Activated T-helper 1 cell treated with anti-CD3 and anti-CD28 coated beads, Interleukin-12 subunit alpha, Interleukin-12 subunit beta, Interleukin-2, Interleukin-4 antibody, amounts not matched to agents 30 ng/mL and 10 ng/mL and 1 ng/mL, durations not matched to agents 14 hours and 24 hours and 36 hours (primary cell): ENCODE measurements at regions of chr12 and their contacts with region 1.

Region 1: GRCh38 chr12:57782608-57783465 is at the start of gene TSFM:
- DNase-seq: peak; percentile 93
- H3K4me3 Mint-ChIP-seq: peak within 1 kb of the TSS; percentile 98
- H3K27ac Mint-ChIP-seq: peak within 1 kb of the TSS; percentile 98
- H3K4me1 Mint-ChIP-seq: peaks cover 44% of the 10 kb centered on the region
- H3K27me3 Mint-ChIP-seq: no peaks in the 10 kb centered on the region
- total RNA-seq, gene TSFM: 63.5 and 68.6 TPM in 2 replicates

Region 2: GRCh38 chr12:57771708-57772428 is 11.0 kb before region 1 on chr12 and contains the start of gene METTL1:
- intact Hi-C with region 1: loop called (anchors 1 kb)
- DNase-seq: peak; percentile 90
- H3K4me3 Mint-ChIP-seq: peak within 1 kb of the TSS; percentile 93
- H3K27ac Mint-ChIP-seq: peak within 1 kb of the TSS; percentile 99
- H3K4me1 Mint-ChIP-seq: peaks cover 40% of the 10 kb centered on the region
- H3K27me3 Mint-ChIP-seq: no peaks in the 10 kb centered on the region
- total RNA-seq, gene METTL1: 89.7 and 90.0 TPM in 2 replicates

Region 3: DNA sequence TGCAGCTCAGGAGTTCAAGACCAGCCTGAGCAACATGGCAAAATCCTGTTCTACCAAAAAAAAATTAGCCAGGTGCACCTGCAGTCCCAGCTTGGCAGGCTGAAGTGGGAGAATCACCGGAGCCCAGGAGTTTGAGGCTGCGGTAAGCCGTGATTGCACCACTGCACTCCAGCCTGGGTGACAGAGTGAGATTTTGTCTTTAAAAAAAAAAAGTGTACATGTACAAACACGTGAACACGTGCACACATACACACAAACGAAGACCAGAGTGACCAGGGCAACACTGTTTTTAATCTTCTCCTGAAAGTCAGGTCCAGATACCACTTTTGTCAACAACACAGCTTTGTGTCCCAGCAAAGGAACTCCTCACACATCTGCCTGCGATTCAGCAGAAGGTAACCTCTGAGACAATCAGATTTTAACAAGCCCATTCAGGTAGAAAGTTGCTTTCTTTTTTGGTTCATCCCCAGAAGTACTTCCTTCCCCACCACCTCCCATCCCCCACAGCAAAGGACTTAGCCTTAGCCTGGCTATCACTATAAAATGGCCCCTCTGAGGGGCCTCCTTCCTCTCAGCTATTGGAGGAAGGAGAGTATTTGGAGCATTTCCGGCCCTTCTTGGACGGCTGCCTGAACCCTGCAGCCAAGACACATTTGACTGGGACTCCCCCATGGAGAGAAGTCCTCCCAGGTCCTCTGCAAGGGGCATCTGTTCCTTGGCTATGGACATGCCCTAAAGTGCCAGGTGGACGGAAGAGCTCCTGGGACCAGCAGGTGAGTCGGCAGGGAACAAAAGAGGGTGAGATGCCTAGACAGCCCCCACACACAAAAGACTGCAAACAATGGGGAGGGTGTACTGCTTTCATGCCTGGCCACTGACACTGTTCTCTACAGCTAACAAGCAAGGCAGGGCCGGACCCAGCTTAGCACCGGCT is 53.9 kb after region 1 on chr12:
- intact Hi-C with region 1: loop called (anchors 1 kb)
- DNase-seq: peak; percentile 33
- H3K4me3 Mint-ChIP-seq: peak overlapping the region; percentile 47
- H3K27ac Mint-ChIP-seq: peak overlapping the region; percentile 87
- H3K4me1 Mint-ChIP-seq: peaks cover 84% of the 10 kb centered on the region
- H3K27me3 Mint-ChIP-seq: no peaks in the 10 kb centered on the region